Ovary (tissue), 10 donors: ENCODE measurements at regions of chr19 and their contacts with region 1.

Region 1: DNA sequence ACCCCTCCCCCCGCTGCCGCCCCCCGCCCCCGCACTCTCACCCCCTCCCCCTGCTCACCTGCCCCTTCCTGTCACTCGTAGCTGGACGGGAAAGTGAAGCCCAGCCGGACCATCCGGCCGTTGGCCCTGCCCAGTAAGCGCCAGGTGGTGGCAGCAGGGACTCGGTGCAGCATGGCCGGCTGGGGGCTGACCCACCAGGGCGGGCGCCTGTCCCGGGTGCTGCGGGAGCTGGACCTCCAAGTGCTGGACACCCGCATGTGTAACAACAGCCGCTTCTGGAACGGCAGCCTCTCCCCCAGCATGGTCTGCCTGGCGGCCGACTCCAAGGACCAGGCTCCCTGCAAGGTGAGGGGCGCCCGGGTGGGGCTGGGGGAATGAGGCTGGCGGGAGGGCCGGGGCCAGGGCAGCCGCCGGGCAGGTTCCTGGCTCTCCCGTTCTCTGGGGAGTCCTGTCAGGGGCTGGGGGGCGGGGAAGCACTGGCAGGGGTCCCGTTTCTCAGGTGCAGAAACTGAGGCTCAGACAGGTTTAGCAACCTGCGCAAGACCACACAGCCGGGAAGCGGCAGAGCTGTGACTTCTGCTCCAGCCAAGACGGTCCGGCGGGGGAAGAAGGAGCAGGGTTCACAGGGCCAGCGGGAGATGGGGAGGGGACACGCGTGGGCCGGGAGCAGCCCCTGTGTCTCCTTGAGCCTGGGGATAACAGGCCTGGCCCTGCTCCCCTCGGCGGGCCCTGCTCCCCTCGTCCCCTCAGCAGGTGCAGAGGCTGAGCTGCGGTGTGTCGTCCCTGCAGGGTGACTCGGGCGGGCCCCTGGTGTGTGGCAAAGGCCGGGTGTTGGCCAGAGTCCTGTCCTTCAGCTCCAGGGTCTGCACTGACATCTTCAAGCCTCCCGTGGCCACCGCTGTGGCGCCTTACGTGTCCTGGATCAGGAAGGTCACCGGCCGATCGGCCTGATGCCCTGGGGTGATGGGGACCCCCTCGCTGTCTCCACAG is 5.3 kb downstream of the GZMM start:
- DNase-seq: no peak
- H3K4me3 ChIP-seq: no peak overlapping the region
- H3K27ac ChIP-seq: no peak overlapping the region
- H3K4me1 ChIP-seq: no peaks in the 10 kb centered on the region
- H3K27me3 ChIP-seq: no peaks in the 10 kb centered on the region
- CTCF ChIP-seq: no peak
- EP300 ChIP-seq: no peak
- POLR2A ChIP-seq: no peak

Region 2: GRCh38 chr19:572140-572742 is 23.1 kb after region 1 on chr19 and contains the start of gene BSG:
- intact Hi-C with region 1: no loop called
- DNase-seq: peak; percentile 98 to 99 (median 98)
- H3K4me3 ChIP-seq: peak within 1 kb of the TSS; percentile 97
- H3K27ac ChIP-seq: peak within 1 kb of the TSS; percentile 71 to 75
- H3K4me1 ChIP-seq: peaks cover 29% of the 10 kb centered on the region
- H3K27me3 ChIP-seq: no peaks in the 10 kb centered on the region
- CTCF ChIP-seq: no peak
- EP300 ChIP-seq: peak; percentile 14
- POLR2A ChIP-seq: peak; percentile 89
- total RNA-seq, gene BSG: 225 to 484 (median 324) TPM

Region 3: DNA sequence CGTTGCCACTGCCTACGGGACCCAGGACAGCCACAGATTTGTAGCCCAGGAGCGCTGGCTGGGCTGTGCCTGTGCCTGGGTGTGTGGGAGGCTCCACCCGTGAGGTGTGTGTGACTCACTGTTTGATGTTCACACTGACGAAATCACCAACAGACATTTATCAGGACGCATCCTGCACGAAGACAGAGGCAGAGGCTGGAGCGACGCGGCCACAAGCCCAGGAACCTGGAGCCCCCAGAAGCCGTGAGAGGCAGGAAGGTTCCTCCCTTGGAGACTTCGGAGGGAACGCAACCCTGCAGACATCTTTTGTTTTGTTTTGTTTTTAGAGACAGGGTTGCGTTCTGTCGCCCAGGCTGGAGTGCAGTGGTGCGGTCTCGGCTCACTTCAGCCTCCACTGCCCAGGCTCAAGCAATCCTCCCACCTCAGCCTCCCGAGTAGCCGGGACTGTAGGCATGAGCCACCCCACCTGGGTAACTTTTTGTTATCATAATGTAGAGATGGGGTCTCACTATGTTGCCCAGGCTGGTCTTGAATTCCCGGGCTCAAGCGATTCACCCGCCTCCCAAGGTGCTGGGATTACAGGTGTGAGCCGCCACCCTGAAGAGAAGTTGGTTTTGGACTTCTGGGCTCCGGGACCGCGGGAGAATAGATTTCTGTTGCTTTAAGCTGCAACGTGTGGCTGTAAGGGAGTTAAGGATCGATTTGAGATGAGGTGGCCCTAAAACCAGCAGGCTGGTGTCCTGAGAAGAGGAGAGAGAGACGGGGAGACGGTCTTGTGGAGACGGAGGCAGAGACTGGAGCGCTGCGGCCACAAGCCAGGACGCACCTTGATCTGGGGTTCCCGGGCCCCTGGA is 410.1 kb after region 1 on chr19:
- intact Hi-C with region 1: loop called in 1 of 4 experiments (anchors 5 kb)
- DNase-seq: peak in 1 of 5 donors; percentile 12
- H3K4me3 ChIP-seq: no peak overlapping the region
- H3K27ac ChIP-seq: no peak overlapping the region
- H3K4me1 ChIP-seq: no peaks in the 10 kb centered on the region
- H3K27me3 ChIP-seq: no peaks in the 10 kb centered on the region
- CTCF ChIP-seq: no peak
- EP300 ChIP-seq: no peak
- POLR2A ChIP-seq: no peak